Uterus (tissue), 4 donors: ENCODE measurements at regions of chr2 and their contacts with region 1.

Region 1: GRCh38 chr2:192051533-192051932 is 143.2 kb downstream of the TMEFF2 start:
- DNase-seq: no peak
- H3K4me3 ChIP-seq: no peak overlapping the region
- H3K27ac ChIP-seq: no peak overlapping the region
- H3K4me1 ChIP-seq: no peaks in the 10 kb centered on the region
- H3K27me3 ChIP-seq: no peaks in the 10 kb centered on the region
- CTCF ChIP-seq: no peak
- POLR2A ChIP-seq: no peak

Region 2: DNA sequence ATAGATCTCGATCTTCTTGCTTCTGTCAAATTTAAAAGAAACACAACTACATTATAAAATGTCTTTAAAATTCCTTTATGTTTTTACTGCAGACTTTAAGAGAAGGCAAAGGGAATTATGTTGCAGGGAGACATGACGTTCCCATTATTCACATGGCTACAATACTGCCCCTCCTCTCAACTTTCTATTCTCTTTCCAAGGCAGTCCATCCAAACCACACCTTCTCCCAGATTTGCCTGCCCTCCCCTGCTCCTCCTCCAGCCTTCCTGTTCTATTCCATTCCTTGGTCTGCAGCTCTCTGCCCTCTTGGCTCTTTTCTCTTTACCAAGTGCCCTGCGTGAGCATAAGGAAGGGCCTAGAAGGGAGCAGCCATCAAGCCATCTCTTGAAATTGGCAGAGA is 312.3 kb before region 1 on chr2:
- intact Hi-C with region 1: loop called (anchors 5 kb)
- DNase-seq: no peak
- H3K4me3 ChIP-seq: no peak overlapping the region
- H3K27ac ChIP-seq: no peak overlapping the region
- H3K4me1 ChIP-seq: no peaks in the 10 kb centered on the region
- H3K27me3 ChIP-seq: no peaks in the 10 kb centered on the region
- CTCF ChIP-seq: no peak
- POLR2A ChIP-seq: no peak